Activated CD8-positive, alpha-beta memory T cell treated with anti-CD3 and anti-CD28 coated beads, Interleukin-2, amount 10 ng/mL, durations not matched to agents 7 days and 5 days (primary cell): ENCODE measurements at regions of chr6 and their contacts with region 1.

Region 1: GRCh38 chr6:131627724-131628682 is at the start of gene MED23:
- DNase-seq: peak; percentile 94
- ATAC-seq: peak; percentile 91
- H3K4me3 Mint-ChIP-seq: peak within 1 kb of the TSS; percentile 84
- H3K27ac Mint-ChIP-seq: peak within 1 kb of the TSS; percentile 92
- H3K4me1 Mint-ChIP-seq: peaks cover 21% of the 10 kb centered on the region
- H3K27me3 Mint-ChIP-seq: no peaks in the 10 kb centered on the region
- total RNA-seq, gene MED23: 28.4 to 33.1 TPM

Region 2: GRCh38 chr6:130885392-130886192 is 742.4 kb before region 1 on chr6:
- CTCF ChIA-PET with region 1: interaction called, 13 read pairs
- DNase-seq: peak; percentile 79
- ATAC-seq: peak; percentile 78
- H3K4me3 Mint-ChIP-seq: no peak overlapping the region
- H3K27ac Mint-ChIP-seq: no peak overlapping the region
- H3K4me1 Mint-ChIP-seq: no peaks in the 10 kb centered on the region
- H3K27me3 Mint-ChIP-seq: no peaks in the 10 kb centered on the region

Region 3: GRCh38 chr6:131182991-131183425 is 445.0 kb before region 1 on chr6:
- CTCF ChIA-PET with region 1: interaction called, 12 read pairs
- DNase-seq: peak; percentile 54
- ATAC-seq: peak; percentile 92
- H3K4me3 Mint-ChIP-seq: peak overlapping the region; percentile 43
- H3K27ac Mint-ChIP-seq: peak overlapping the region; percentile 97
- H3K4me1 Mint-ChIP-seq: peaks cover 9% of the 10 kb centered on the region
- H3K27me3 Mint-ChIP-seq: no peaks in the 10 kb centered on the region

Region 4: GRCh38 chr6:131597446-131597845 is 30.6 kb before region 1 on chr6:
- CTCF ChIA-PET with region 1: interaction called, 16 read pairs
- DNase-seq: no peak
- ATAC-seq: no peak
- H3K4me3 Mint-ChIP-seq: no peak overlapping the region
- H3K27ac Mint-ChIP-seq: no peak overlapping the region
- H3K4me1 Mint-ChIP-seq: no peaks in the 10 kb centered on the region
- H3K27me3 Mint-ChIP-seq: no peaks in the 10 kb centered on the region

Region 5: DNA sequence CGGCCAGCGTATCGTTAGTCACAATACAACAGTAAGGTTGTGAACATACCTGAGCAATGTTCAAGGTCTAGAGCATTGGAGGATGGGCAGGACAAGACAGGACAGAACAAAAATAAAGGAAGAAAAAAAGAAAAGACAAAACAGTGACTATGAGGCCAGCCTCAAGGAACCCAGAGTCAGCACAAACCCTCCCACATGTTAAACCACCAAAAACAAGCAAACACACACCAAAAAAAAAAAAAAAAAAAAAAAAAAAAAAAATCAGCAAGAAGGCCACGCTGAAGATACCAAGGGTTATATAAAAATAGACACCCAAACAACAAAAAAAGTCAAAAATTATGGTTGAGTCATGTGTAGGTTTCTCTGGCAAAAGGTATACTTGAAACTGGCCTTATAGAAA is 12.7 kb before region 1 on chr6:
- CTCF ChIA-PET with region 1: interaction called, 18 read pairs
- DNase-seq: no peak
- ATAC-seq: no peak
- H3K4me3 Mint-ChIP-seq: no peak overlapping the region
- H3K27ac Mint-ChIP-seq: no peak overlapping the region
- H3K4me1 Mint-ChIP-seq: peaks cover 5% of the 10 kb centered on the region
- H3K27me3 Mint-ChIP-seq: no peaks in the 10 kb centered on the region

Region 6: DNA sequence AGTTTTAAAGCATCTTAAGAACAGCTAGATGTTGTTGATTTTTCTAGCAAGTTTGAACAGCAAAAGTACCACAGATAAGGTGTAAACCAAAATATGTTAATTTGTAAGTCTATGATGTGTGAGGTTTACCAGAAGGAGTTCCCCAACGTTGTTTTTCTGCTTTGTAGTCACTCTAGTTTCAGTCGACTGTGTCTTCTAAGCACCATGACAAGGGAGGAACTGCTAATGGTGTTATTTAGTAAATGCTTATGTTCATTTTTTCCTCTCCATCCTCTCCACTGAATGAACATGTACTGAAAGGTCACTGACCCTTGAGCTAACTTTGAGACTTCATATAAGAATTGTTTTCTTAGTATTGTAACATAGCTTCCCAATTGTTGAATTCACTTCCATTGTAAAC is 12.1 kb after region 1 on chr6:
- CTCF ChIA-PET with region 1: interaction called, 13 read pairs
- DNase-seq: no peak
- ATAC-seq: peak; percentile 30
- H3K4me3 Mint-ChIP-seq: no peak overlapping the region
- H3K27ac Mint-ChIP-seq: peak overlapping the region; percentile 31
- H3K4me1 Mint-ChIP-seq: peaks cover 4% of the 10 kb centered on the region
- H3K27me3 Mint-ChIP-seq: no peaks in the 10 kb centered on the region